ENCODE measurements at regions of chr22 and their contacts with region 1.

Region 1: DNA sequence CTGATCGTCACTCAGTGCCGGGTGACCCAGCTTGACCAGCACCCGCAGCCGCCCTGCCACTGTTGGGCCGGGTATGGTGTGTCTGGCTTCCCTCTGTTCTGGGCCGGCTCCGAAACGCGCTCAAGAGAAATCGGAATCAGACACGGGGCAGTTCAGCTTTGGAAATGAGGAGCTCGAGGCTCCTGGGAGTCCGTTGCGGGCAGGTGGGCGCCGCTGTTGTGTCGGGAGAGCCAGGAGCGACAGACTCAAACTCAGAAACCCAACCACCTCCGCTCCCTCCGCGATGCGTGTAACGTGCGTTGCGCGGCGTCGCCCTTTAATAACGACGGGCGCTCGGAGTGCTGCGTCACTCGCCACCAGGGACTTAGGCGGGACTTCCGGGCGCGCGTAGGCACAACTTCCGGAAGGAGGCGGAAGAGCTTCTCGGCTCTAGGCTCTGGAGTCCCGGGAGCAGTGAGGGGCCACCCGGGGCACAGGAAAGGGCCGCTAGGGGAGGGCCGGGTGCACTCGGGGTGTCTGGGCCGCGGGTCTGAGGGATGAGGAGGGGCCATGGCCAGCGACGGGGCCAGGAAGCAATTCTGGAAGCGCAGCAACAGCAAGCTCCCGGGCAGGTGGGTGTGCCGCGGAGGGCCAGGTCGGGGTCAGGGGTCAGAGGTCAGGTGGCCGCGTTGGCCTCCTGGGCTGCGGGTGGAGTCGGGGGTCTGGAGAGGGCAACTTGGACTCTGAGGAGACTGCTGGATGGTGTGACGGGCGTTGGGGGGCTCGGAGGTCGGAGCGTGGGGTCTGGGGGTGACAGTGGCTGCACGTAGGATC is at the start of gene TBC1D22A:
- DNase-seq: peak; percentile 93
- H3K4me3 ChIP-seq: peak within 1 kb of the TSS; percentile 95
- H3K4me3 Mint-ChIP-seq: peak within 1 kb of the TSS; percentile 80
- H3K27ac Mint-ChIP-seq: peak within 1 kb of the TSS; percentile 93
- H3K4me1 ChIP-seq: peaks cover 8% of the 10 kb centered on the region; the same call in 1 of the 2 replicates
- H3K4me1 Mint-ChIP-seq: peaks cover 11% of the 10 kb centered on the region
- H3K27me3 ChIP-seq: no peaks in the 10 kb centered on the region
- H3K27me3 Mint-ChIP-seq: no peaks in the 10 kb centered on the region
- CTCF ChIP-seq: no peak
- total RNA-seq, gene TBC1D22A: 26.7 and 32.6 TPM in 2 replicates

Region 2: DNA sequence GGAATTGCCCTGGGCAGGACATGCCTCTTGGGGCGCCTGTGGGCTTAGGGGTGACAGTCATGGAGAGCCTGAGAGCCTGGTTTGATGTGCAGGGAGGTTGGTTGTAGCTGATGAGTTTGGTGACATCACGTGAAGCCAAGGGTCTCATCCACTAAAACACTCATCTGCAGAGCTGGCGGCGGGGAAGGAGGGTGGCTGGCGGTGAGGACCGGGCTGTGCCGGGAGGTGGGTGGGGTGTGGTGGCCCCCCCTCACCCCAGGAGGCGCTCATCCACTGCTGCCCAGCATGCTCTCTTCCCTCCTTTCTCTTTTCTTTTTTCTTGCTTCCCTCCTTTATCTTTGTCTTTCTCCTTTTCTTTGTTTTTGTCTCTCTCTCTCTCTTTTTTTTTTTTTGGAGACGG is 93.2 kb before region 1 on chr22:
- CTCF ChIA-PET with region 1: no interaction called
- POLR2A ChIA-PET with region 1: interaction called, 19 read pairs
- intact Hi-C with region 1: no loop called
- DNase-seq: no peak
- H3K4me3 ChIP-seq: no peak overlapping the region
- H3K4me3 Mint-ChIP-seq: no peak overlapping the region
- H3K27ac Mint-ChIP-seq: no peak overlapping the region
- H3K4me1 ChIP-seq: peaks cover 6% of the 10 kb centered on the region
- H3K4me1 Mint-ChIP-seq: no peaks in the 10 kb centered on the region
- H3K27me3 ChIP-seq: no peaks in the 10 kb centered on the region
- H3K27me3 Mint-ChIP-seq: no peaks in the 10 kb centered on the region
- CTCF ChIP-seq: no peak

Region 3: GRCh38 chr22:46748908-46749675 is 13.4 kb before region 1 on chr22:
- CTCF ChIA-PET with region 1: interaction called, 5 read pairs
- POLR2A ChIA-PET with region 1: interaction called, 10 read pairs
- intact Hi-C with region 1: no loop called
- DNase-seq: peak in 1 of 2 experiments; percentile 45
- H3K4me3 ChIP-seq: no peak overlapping the region
- H3K4me3 Mint-ChIP-seq: no peak overlapping the region
- H3K27ac Mint-ChIP-seq: peak overlapping the region; percentile 86
- H3K4me1 ChIP-seq: peaks cover 27% of the 10 kb centered on the region
- H3K4me1 Mint-ChIP-seq: peaks cover 25% of the 10 kb centered on the region
- H3K27me3 ChIP-seq: no peaks in the 10 kb centered on the region
- H3K27me3 Mint-ChIP-seq: no peaks in the 10 kb centered on the region
- CTCF ChIP-seq: no peak

Region 4: DNA sequence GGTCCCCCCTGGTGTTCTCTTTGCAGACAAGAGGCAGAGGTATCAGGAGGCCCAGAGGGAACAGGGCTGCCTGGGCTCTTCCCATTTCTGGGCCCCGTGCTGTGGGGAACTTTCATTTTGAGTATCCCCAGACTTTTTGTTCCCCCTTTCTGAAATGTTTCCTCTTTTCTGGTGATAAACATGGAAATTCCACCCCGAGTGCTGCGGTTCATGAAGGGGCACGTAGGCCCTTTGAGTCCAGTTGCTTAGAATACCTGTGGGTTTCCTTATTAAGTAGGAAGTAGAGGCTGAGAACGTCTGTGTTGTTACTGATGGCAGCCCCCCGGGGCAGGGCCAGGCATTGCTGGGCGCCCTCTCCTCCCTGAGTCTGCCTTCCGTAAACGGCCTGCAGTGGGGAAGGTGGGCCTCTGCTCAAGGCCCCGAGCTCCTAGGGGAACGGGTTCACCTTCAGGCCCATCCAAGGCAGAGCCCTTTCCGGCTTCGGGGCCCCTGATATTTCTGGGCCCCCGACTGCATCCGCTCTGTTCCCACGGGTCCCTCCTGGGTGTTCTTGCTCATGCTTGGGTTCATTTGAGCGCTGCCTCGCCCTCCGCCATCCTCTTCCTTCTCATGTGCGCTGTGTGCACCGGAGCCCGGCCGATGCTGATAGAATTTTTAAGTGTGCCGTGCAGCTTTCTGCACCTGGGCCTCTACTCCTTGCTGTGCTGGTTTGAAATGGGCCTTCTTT is 12.0 kb after region 1 on chr22:
- CTCF ChIA-PET with region 1: interaction called, 9 read pairs
- POLR2A ChIA-PET with region 1: interaction called, 41 read pairs
- intact Hi-C with region 1: loop called (anchors 1 kb)
- DNase-seq: no peak
- H3K4me3 ChIP-seq: no peak overlapping the region
- H3K4me3 Mint-ChIP-seq: peak overlapping the region; percentile 44
- H3K27ac Mint-ChIP-seq: peak overlapping the region; percentile 84
- H3K4me1 ChIP-seq: peaks cover 38% of the 10 kb centered on the region
- H3K4me1 Mint-ChIP-seq: peaks cover 34% of the 10 kb centered on the region
- H3K27me3 ChIP-seq: no peaks in the 10 kb centered on the region
- H3K27me3 Mint-ChIP-seq: no peaks in the 10 kb centered on the region
- CTCF ChIP-seq: no peak

Region 5: DNA sequence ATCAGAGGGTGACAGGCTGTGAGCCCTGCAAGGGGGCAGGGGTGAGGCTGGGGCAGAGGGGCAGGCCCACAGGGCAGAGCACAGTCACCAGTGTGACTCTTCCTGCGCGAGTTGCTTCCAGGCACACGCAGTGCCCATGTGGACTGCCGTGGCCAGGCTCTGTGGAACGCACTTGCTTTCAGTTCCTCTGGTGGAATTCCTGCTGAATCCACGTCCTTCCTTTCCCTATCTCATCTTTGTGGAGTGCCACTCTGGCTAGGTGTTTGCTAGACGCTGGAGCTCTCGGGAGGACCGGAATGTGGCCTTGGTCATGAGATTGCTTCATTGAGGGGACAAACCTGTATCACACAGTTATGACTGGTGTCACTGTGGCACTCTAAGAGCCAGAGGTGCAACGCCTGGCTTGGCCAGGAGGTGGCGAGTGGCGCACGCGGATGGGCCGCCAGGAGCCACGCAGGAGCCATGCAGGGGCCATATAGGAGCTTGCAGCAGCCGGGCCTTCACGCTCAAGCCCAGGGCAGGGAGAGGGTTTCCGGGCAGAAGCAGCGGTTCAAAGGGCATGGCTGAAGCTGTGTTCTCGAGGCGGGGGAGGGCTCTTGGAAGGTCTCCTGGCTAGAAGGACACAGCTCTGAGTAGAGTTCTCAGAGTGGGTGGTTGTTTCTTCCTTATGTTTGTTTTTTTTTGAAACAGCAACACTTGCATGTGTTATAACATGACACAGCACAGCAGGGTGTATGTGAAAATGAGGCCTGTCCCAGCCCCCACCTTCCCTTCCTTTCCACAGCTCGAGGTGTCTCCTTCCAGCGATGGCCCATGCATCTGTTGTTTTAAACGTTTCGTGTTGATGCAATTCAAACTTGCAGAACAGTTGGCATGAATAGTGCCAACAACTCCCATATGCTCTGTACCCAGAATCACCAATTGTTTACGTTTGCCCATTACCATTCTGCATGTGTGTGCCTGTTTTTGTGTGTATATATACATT is 36.2 kb after region 1 on chr22:
- CTCF ChIA-PET with region 1: interaction called, 8 read pairs
- POLR2A ChIA-PET with region 1: interaction called, 8 read pairs
- intact Hi-C with region 1: loop called (anchors 1 kb)
- DNase-seq: peak; percentile 75 to 86
- H3K4me3 ChIP-seq: no peak overlapping the region
- H3K4me3 Mint-ChIP-seq: no peak overlapping the region
- H3K27ac Mint-ChIP-seq: peak overlapping the region; percentile 74
- H3K4me1 ChIP-seq: no peaks in the 10 kb centered on the region
- H3K4me1 Mint-ChIP-seq: peaks cover 25% of the 10 kb centered on the region
- H3K27me3 ChIP-seq: no peaks in the 10 kb centered on the region
- H3K27me3 Mint-ChIP-seq: no peaks in the 10 kb centered on the region
- CTCF ChIP-seq: peak; percentile 89 to 90

Measured in Caco-2 (cell line).